B cell (primary cell): ENCODE measurements at regions of chr12 and their contacts with region 1.

Region 1: GRCh38 chr12:92445253-92446082 is 257.3 kb upstream of the PLEKHG7 start:
- DNase-seq: peak; percentile 89
- ATAC-seq: peak; percentile 71
- H3K4me3 ChIP-seq: peak overlapping the region in 4 of 5 experiments; percentile 0 to 43 (median 25)
- H3K4me3 Mint-ChIP-seq: peak overlapping the region; percentile 80
- H3K27ac ChIP-seq: peak overlapping the region; percentile 99
- H3K27ac Mint-ChIP-seq: peak overlapping the region; percentile 96
- H3K4me1 ChIP-seq: peaks cover 90 to 93% of the 10 kb centered on the region in 2 donors
- H3K4me1 Mint-ChIP-seq: peaks cover 91% of the 10 kb centered on the region
- H3K27me3 ChIP-seq: no peaks in the 10 kb centered on the region
- H3K27me3 Mint-ChIP-seq: no peaks in the 10 kb centered on the region
- CTCF ChIP-seq: no peak

Region 2: DNA sequence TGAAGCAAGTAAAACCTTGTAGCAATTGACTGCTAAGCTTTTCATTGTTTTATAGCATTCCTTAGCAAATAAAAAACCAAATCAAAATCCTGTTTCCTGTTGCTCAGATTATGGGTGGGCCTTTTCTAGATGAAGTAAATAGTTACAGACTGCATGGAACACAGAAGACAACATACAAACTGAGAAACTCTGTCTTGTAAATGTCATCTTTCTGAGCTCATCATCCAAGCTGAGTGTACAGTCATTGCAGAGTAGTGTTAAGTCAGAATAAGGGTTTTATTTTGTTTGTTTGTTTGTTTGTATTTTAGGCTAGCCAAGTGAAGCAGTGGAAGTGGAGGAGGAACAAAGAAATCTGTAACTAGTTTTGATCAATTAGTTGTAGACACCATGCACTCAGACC is 275.4 kb before region 1 on chr12:
- CTCF ChIA-PET with region 1: interaction called, 11 read pairs
- POLR2A ChIA-PET with region 1: interaction called, 12 read pairs
- intact Hi-C with region 1: loop called (anchors 1 kb)
- DNase-seq: no peak
- ATAC-seq: no peak
- H3K4me3 ChIP-seq: no peak overlapping the region
- H3K4me3 Mint-ChIP-seq: peak overlapping the region; percentile 29
- H3K27ac ChIP-seq: peak overlapping the region; percentile 91 to 95
- H3K27ac Mint-ChIP-seq: peak overlapping the region; percentile 75
- H3K4me1 ChIP-seq: peaks cover 46 to 63% of the 10 kb centered on the region in 2 donors
- H3K4me1 Mint-ChIP-seq: peaks cover 68% of the 10 kb centered on the region
- H3K27me3 ChIP-seq: no peaks in the 10 kb centered on the region
- H3K27me3 Mint-ChIP-seq: no peaks in the 10 kb centered on the region
- CTCF ChIP-seq: no peak

Region 3: DNA sequence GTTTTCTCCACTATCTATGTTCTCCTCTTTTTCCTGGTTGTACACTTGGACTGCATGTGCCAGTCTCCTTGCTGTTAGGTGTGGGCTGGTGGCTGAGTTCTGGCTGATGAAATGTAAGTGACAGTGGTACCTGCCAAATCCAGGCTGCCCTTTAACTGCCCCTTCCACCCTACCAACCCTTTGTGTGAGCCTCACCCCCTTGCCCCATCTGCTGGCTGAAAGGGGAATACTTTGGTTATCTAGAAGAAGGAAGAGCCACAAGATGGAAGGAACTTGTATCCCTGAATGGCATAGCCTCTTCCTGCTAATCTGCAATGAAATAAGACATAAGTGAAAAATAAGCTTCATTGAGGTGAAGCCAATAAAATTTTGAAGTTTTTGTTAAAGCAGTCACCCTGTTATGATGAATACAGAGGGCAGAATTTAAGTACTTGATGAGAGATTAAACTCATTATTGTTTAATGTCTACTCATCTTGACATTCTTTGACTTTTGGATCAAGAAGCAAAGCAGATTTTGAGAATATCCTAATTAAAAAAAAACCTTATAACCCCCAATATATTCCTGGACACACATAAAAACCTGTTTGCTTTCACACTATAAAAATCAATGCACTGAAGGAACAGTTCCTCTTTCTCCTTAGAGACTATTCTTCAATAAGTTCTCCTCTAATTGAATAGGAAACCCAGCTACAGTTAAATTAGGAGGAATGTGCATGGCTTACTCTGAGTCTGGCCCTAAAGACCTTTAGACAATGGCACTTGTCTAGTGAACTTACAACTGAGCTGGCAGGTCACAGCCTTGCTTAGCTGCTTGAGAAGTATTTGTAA is 37.2 kb before region 1 on chr12:
- CTCF ChIA-PET with region 1: interaction called, 5 read pairs
- POLR2A ChIA-PET with region 1: interaction called, 5 read pairs
- intact Hi-C with region 1: loop called (anchors 2 kb)
- DNase-seq: peak; percentile 74
- ATAC-seq: peak; percentile 49
- H3K4me3 ChIP-seq: no peak overlapping the region
- H3K4me3 Mint-ChIP-seq: peak overlapping the region; percentile 0
- H3K27ac ChIP-seq: peak overlapping the region; percentile 40 to 71
- H3K27ac Mint-ChIP-seq: peak overlapping the region; percentile 88
- H3K4me1 ChIP-seq: peaks cover 43% of the 10 kb centered on the region in 2 donors
- H3K4me1 Mint-ChIP-seq: peaks cover 67% of the 10 kb centered on the region
- H3K27me3 ChIP-seq: no peaks in the 10 kb centered on the region
- H3K27me3 Mint-ChIP-seq: no peaks in the 10 kb centered on the region
- CTCF ChIP-seq: peak; percentile 57

Region 4: DNA sequence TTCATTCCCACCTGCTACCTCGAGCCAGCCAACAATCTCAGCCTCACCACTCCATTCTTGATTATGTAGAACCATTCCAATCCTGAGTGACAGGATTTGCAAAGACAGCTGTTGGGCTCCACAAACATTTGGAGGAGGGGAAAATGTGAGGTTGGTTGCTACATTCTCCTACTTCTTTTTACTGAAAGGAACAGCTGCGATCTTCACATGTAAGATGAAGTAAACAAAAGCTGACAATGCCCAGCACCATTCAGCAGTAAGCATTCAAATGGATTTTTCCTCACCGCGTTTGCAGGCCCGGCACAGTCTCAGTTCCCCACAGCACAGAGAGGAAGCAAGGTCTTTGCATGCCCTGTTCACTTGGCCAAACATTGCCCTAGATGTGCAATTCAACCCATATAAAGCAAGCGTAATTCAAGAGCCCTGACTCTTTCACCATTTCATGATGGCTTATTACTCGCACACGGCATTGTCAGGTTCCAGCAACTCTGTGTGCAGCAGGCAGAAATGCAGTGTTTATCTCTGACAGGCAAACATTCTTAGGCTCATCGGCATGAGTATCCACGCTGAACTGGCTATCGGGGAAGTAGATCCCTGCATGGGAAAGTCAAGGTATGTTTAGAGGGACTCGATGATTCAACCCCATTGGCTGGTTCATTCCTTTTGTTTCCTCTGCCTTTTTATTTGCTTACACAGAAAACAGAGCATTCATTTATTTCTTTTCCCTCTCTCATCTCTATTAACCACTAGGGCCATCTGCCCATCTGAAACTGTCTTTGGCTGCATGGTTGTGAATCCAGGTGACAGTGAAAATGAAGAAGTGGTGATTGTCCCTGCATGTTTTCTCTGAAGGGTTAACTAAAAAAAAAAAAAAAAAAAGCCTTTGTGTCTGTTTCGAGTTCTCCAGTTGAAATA is 21.2 kb after region 1 on chr12:
- CTCF ChIA-PET with region 1: interaction called, 25 read pairs
- POLR2A ChIA-PET with region 1: interaction called, 38 read pairs
- intact Hi-C with region 1: loop called (anchors 1 kb)
- DNase-seq: peak; percentile 87
- ATAC-seq: peak; percentile 76
- H3K4me3 ChIP-seq: peak overlapping the region; percentile 61 to 93 (median 68)
- H3K4me3 Mint-ChIP-seq: peak overlapping the region; percentile 94
- H3K27ac ChIP-seq: peak overlapping the region; percentile 85 to 93
- H3K27ac Mint-ChIP-seq: peak overlapping the region; percentile 95
- H3K4me1 ChIP-seq: peaks cover 80 to 83% of the 10 kb centered on the region in 2 donors
- H3K4me1 Mint-ChIP-seq: peaks cover 81% of the 10 kb centered on the region
- H3K27me3 ChIP-seq: no peaks in the 10 kb centered on the region
- H3K27me3 Mint-ChIP-seq: no peaks in the 10 kb centered on the region
- CTCF ChIP-seq: no peak

Region 5: DNA sequence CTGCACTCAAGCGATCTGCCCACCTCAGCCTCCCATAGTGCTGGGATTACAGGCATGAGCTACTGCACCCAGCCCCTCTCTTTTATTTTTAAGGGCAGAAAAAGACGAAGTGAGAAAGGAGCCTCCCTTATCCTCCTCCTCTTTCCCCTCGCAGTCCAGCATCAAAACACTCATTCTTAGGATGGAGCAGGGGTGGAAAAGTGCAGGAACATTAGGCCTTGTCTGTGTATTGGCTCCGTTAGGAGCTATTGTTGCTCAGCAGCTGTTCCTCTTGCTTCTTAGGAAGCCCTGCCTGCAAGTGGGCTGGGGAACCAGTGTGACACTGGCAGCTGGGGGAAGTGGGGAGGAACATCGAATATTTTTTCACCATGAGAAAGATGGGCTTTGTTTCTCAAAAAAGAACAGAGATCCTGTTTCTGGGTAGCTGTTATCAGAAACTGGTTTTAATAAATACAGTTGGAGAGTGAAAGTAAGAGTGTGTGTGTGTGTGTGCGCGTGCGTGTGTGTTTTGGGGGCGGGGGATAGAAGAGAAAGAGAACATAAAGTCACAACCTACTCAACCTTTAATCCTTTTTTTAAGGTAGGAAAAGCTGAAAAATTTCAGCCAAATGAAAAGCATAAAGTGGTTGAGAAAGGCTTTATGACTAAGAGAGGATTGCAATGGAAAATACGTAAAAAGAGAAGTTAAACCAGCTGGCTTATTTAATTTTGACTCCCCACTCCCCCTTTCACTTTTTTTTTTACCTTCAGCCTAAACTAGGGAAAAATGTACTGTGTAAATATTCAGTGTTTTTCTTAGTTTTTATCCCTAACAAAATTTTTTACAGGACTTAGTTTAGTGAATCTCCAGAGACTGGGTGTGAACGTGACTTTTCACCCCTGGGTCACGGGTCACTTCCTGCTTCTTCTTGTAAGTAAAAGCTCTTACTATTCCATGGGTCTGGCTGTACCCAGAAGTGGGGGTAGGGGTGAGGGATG is 60.1 kb after region 1 on chr12:
- CTCF ChIA-PET with region 1: interaction called, 35 read pairs
- POLR2A ChIA-PET with region 1: interaction called, 10 read pairs
- intact Hi-C with region 1: loop called (anchors 1 kb)
- DNase-seq: peak; percentile 75
- ATAC-seq: peak; percentile 61
- H3K4me3 ChIP-seq: peak overlapping the region; percentile 16 to 62 (median 43)
- H3K4me3 Mint-ChIP-seq: peak overlapping the region; percentile 73
- H3K27ac ChIP-seq: peak overlapping the region; percentile 79 to 91
- H3K27ac Mint-ChIP-seq: peak overlapping the region; percentile 87
- H3K4me1 ChIP-seq: peaks cover 60 to 62% of the 10 kb centered on the region in 2 donors
- H3K4me1 Mint-ChIP-seq: peaks cover 65% of the 10 kb centered on the region
- H3K27me3 ChIP-seq: no peaks in the 10 kb centered on the region
- H3K27me3 Mint-ChIP-seq: no peaks in the 10 kb centered on the region
- CTCF ChIP-seq: no peak

Region 6: GRCh38 chr12:92593734-92594402 is 148.4 kb after region 1 on chr12:
- CTCF ChIA-PET with region 1: interaction called, 4 read pairs
- POLR2A ChIA-PET with region 1: interaction called, 5 read pairs
- intact Hi-C with region 1: loop called (anchors 1 kb)
- DNase-seq: peak; percentile 94
- ATAC-seq: peak; percentile 93
- H3K4me3 ChIP-seq: peak overlapping the region in 2 of 5 experiments; percentile 20 to 22
- H3K4me3 Mint-ChIP-seq: peak overlapping the region; percentile 69
- H3K27ac ChIP-seq: peak overlapping the region; percentile 86 to 97
- H3K27ac Mint-ChIP-seq: peak overlapping the region; percentile 94
- H3K4me1 ChIP-seq: peaks cover 21 to 25% of the 10 kb centered on the region in 2 donors
- H3K4me1 Mint-ChIP-seq: peaks cover 34% of the 10 kb centered on the region
- H3K27me3 ChIP-seq: no peaks in the 10 kb centered on the region
- H3K27me3 Mint-ChIP-seq: no peaks in the 10 kb centered on the region
- CTCF ChIP-seq: no peak